Activated naive CD4-positive, alpha-beta T cell treated with anti-CD3 and anti-CD28 coated beads for 36 hours (primary cell): ENCODE measurements at regions of chr1 and their contacts with region 1.

Region 1: GRCh38 chr1:168991667-168992475 is 114.6 kb upstream of the ATP1B1 start:
- DNase-seq: peak; percentile 64
- H3K4me3 Mint-ChIP-seq: no peak overlapping the region
- H3K27ac Mint-ChIP-seq: peak overlapping the region; percentile 89
- H3K4me1 Mint-ChIP-seq: peaks cover 23% of the 10 kb centered on the region
- H3K27me3 Mint-ChIP-seq: peaks cover 3% of the 10 kb centered on the region

Region 2: GRCh38 chr1:169012416-169012815 is 20.5 kb after region 1 on chr1:
- CTCF ChIA-PET with region 1: no interaction called
- intact Hi-C with region 1: loop called (anchors 1 kb)
- DNase-seq: no peak
- H3K4me3 Mint-ChIP-seq: no peak overlapping the region
- H3K27ac Mint-ChIP-seq: no peak overlapping the region
- H3K4me1 Mint-ChIP-seq: peaks cover 11% of the 10 kb centered on the region
- H3K27me3 Mint-ChIP-seq: no peaks in the 10 kb centered on the region

Region 3: DNA sequence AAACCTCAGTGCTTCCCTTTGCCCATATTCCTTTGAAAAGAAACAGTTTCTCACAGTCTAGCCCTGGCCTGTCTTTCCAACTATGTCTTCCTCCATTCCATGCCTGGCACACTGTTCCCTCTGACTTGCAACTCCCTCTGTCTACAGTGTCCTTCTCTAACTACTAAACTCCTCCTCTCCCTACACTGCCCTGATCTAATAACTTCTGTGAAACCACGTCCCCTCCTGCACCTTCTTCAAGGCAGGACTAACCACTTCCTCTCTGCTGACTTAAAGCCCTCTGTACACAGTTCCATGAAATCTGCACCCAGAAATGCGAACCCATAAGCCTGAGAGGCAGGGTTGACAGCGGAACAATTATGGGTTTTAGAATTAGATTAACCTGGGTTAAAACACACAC is 52.4 kb after region 1 on chr1:
- CTCF ChIA-PET with region 1: no interaction called
- intact Hi-C with region 1: loop called (anchors 1 kb)
- DNase-seq: peak; percentile 68
- H3K4me3 Mint-ChIP-seq: no peak overlapping the region
- H3K27ac Mint-ChIP-seq: peak overlapping the region; percentile 66
- H3K4me1 Mint-ChIP-seq: peaks cover 63% of the 10 kb centered on the region
- H3K27me3 Mint-ChIP-seq: no peaks in the 10 kb centered on the region

Region 4: DNA sequence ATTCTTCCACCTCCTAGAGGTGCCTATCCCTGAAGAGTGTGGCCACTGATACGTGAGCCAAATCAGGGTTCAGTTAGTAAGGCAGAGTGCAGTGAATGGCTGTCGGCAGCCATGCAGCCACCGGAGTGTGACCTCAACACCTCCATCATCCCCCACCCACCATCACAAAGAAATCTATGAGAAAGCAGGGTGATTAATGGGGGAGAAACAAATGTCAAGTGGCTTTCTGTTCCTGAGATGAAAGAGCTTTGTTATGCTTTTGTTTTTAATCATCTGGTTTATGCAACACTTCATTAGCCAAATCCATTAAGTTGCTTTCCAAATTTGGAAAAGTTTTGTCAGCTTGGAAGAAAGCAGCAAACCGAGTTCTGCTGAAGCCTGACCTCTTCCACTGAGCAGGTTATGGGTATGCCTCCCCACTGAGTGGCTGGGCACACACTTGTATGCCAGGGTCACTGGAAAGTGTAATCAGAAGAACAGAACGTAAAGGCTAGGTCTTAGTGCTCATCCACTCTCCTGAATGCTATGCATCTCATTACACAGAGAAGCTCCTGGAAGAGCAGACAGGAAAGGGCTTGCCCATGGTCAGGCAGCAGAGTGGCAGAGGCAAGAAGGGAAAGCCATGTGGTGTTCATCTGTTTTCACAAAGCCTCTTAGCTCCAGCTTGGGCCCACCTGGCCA is 57.5 kb after region 1 on chr1:
- CTCF ChIA-PET with region 1: no interaction called
- intact Hi-C with region 1: loop called (anchors 1 kb)
- DNase-seq: peak; percentile 67
- H3K4me3 Mint-ChIP-seq: no peak overlapping the region
- H3K27ac Mint-ChIP-seq: peak overlapping the region; percentile 76
- H3K4me1 Mint-ChIP-seq: peaks cover 61% of the 10 kb centered on the region
- H3K27me3 Mint-ChIP-seq: peaks cover 2% of the 10 kb centered on the region